ENCODE measurements at regions of chr1 and their contacts with region 1.

Region 1: GRCh38 chr1:17053685-17054410 is at the start of gene SDHB:
- DNase-seq: peak; percentile 97 to 100 (median 99)
- ATAC-seq: peak; percentile 98
- H3K4me3 ChIP-seq: peak within 1 kb of the TSS; percentile 93
- H3K4me3 Mint-ChIP-seq: peak within 1 kb of the TSS; percentile 100
- H3K27ac ChIP-seq: peak within 1 kb of the TSS; percentile 66 to 85
- H3K27ac Mint-ChIP-seq: peak within 1 kb of the TSS; percentile 97
- H3K4me1 ChIP-seq: peaks cover 19% of the 10 kb centered on the region
- H3K4me1 Mint-ChIP-seq: peaks cover 36% of the 10 kb centered on the region
- H3K27me3 ChIP-seq: no peaks in the 10 kb centered on the region
- H3K27me3 Mint-ChIP-seq: no peaks in the 10 kb centered on the region
- CTCF ChIP-seq: no peak
- total RNA-seq, gene SDHB: 53.9 to 56.2 TPM

Region 2: GRCh38 chr1:15409388-15410222 is 1644.2 kb before region 1 on chr1 and contains the start of gene EFHD2:
- CTCF ChIA-PET with region 1: no interaction called
- POLR2A ChIA-PET with region 1: no interaction called
- intact Hi-C with region 1: loop called in 1 of 2 experiments (anchors 10 kb)
- DNase-seq: peak; percentile 62 to 99 (median 85)
- ATAC-seq: peak; percentile 79
- H3K4me3 ChIP-seq: peak within 1 kb of the TSS; percentile 94
- H3K4me3 Mint-ChIP-seq: peak within 1 kb of the TSS; percentile 97
- H3K27ac ChIP-seq: peak within 1 kb of the TSS; percentile 55 to 85
- H3K27ac Mint-ChIP-seq: peak within 1 kb of the TSS; percentile 94
- H3K4me1 ChIP-seq: peaks cover 68% of the 10 kb centered on the region
- H3K4me1 Mint-ChIP-seq: peaks cover 35% of the 10 kb centered on the region
- H3K27me3 ChIP-seq: no peaks in the 10 kb centered on the region
- H3K27me3 Mint-ChIP-seq: no peaks in the 10 kb centered on the region
- CTCF ChIP-seq: no peak
- total RNA-seq, gene EFHD2: 79.1 to 80.9 TPM

Region 3: DNA sequence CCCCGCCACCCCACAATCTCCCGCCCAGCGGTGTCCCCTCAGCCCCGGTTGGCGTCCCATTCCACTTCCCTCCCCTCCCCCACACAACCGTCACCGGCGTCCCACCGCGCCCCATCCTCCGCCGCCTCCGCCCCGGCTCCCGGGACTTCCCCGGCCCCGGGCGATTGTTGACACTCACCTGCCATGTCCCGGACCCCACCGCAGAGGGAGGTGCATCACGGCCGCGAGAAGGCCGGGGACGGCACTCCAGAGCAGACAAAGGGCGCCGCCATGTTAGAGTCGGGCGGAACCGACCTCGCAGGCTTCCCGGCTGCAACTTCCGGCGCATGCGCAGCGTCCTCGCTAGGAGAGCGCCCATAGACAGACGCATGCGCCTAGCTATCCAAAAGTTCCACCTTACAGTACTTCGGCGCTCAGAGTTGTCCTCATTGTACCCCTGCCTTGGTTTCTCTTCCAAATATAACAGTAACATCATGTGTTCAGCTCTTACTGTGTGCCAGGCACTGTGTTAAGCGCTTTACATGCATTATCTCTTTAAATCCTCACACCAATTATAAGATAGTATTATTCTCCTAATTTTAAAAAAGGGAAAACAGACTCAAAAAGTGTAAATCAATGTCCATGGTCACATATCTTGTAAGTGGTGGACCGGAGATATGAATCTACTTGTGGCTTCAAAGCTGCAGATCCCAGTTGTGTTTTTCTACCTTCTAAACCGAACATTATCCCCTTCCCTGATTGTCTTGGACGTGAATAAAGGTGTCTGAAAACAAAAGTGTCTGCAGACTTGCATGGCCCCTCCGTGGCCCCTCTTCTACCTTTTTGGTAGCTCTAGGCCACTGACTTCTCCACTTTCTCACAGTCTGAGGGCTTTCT is 1077.8 kb before region 1 on chr1 and contains the start of gene ZBTB17:
- CTCF ChIA-PET with region 1: no interaction called
- POLR2A ChIA-PET with region 1: no interaction called
- intact Hi-C with region 1: loop called in 1 of 2 experiments (anchors 10 kb)
- DNase-seq: peak; percentile 91 to 99 (median 94)
- ATAC-seq: peak; percentile 92
- H3K4me3 ChIP-seq: peak within 1 kb of the TSS; percentile 91
- H3K4me3 Mint-ChIP-seq: peak within 1 kb of the TSS; percentile 99
- H3K27ac ChIP-seq: peak within 1 kb of the TSS; percentile 67 to 70
- H3K27ac Mint-ChIP-seq: peak within 1 kb of the TSS; percentile 92
- H3K4me1 ChIP-seq: peaks cover 37% of the 10 kb centered on the region
- H3K4me1 Mint-ChIP-seq: peaks cover 34% of the 10 kb centered on the region
- H3K27me3 ChIP-seq: no peaks in the 10 kb centered on the region
- H3K27me3 Mint-ChIP-seq: no peaks in the 10 kb centered on the region
- CTCF ChIP-seq: no peak
- total RNA-seq, gene ZBTB17: 70.2 to 78.1 TPM

Region 4: DNA sequence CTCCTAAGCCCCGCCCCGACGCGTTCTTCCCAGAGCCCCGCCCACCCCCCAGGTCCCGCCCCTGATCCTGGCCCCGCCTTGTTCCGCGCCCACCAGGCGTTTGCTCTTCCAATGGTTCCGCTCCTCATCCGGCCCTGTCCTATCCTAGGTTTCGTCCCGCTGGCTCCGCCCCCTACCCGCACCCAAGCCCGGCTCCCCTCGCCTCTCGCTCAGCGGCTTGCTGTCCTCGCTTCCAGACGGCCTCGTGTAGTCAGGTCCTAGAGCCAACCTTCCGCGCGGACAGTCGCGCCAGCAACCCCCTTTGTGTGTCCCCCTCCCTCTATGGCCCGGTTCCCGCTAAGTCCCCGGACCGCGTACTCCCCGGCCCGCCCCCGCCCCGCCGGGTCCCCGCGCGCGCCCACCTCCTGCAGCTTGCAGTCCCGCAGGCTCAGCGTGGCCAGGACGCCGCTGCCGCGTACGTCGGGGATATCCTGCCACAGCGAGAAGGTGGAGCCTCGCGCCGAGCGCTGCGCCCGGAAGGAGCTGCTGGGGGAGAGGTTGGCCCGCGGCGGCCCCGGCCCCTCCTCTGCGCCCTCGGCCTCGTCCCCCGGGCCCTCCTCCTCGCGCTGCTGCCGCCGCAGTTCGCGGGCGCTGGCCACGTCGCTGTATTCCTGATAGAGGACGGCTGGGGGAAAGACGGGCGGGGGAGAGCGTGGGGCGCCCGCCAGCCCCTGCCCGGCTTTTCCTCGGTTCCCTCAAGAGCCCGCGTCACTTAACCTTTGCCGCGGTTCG is 847.1 kb before region 1 on chr1:
- CTCF ChIA-PET with region 1: no interaction called
- POLR2A ChIA-PET with region 1: no interaction called
- intact Hi-C with region 1: loop called in 1 of 2 experiments (anchors 10 kb)
- DNase-seq: peak; percentile 85 to 98 (median 91)
- ATAC-seq: peak; percentile 88
- H3K4me3 ChIP-seq: peak overlapping the region; percentile 75
- H3K4me3 Mint-ChIP-seq: peak overlapping the region; percentile 93
- H3K27ac ChIP-seq: peak overlapping the region; percentile 60 to 86
- H3K27ac Mint-ChIP-seq: peak overlapping the region; percentile 95
- H3K4me1 ChIP-seq: peaks cover 25% of the 10 kb centered on the region
- H3K4me1 Mint-ChIP-seq: peaks cover 12% of the 10 kb centered on the region
- H3K27me3 ChIP-seq: no peaks in the 10 kb centered on the region
- H3K27me3 Mint-ChIP-seq: no peaks in the 10 kb centered on the region
- CTCF ChIP-seq: no peak

Region 5: GRCh38 chr1:16904560-16905111 is 149.2 kb before region 1 on chr1:
- CTCF ChIA-PET with region 1: no interaction called
- POLR2A ChIA-PET with region 1: no interaction called
- intact Hi-C with region 1: loop called in 1 of 2 experiments (anchors 5 kb)
- DNase-seq: peak; percentile 97 to 100 (median 99)
- ATAC-seq: peak; percentile 93
- H3K4me3 ChIP-seq: peak overlapping the region; percentile 63
- H3K4me3 Mint-ChIP-seq: no peak overlapping the region
- H3K27ac ChIP-seq: peak overlapping the region; percentile 98 to 99
- H3K27ac Mint-ChIP-seq: no peak overlapping the region
- H3K4me1 ChIP-seq: peaks cover 55% of the 10 kb centered on the region
- H3K4me1 Mint-ChIP-seq: peaks cover 36% of the 10 kb centered on the region
- H3K27me3 ChIP-seq: no peaks in the 10 kb centered on the region
- H3K27me3 Mint-ChIP-seq: no peaks in the 10 kb centered on the region
- CTCF ChIP-seq: no peak

Region 6: DNA sequence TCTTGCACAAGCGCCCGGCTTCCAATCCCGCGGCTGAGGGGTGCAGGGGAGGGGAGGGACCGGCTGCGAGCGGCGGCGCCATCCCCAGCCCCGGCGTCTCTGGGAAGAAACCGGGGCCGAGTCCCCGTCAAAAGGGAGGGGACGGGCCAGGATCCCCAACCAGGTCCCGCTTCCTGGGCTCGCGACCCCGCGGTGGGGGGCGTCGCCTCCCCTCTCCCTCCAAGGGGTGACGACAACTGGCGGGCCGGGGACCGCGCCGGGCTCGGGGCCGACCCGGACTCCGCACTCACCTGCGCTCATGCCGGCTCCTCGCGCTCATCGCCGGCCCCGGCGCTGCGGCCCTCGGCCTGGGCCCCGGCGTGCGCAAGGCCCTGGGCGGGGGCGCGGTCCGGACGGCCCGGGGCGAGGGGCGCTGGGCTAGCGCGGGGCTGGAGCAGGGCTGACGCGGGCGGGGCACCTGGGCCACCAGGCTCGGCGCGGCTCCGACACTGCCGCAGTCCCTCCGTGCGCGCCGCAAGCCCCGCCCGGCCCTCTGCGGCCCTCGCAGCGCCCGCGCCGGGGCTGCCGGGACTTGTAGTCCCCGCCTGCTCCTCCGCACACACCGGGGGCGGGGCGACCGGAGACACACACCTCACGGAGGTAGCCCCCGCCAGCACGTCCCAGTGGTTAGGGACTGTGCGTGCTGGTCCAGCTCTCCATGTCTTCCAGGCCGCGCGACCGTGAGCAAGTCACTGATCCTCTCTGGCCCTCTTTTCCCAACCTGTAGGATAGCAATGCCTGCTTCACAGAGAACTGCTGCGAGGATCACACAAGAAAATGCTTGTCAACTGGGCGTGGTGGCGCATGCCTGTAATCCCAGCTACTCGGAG is 42.2 kb before region 1 on chr1 and contains the start of gene ATP13A2:
- CTCF ChIA-PET with region 1: no interaction called
- POLR2A ChIA-PET with region 1: no interaction called
- intact Hi-C with region 1: loop called (anchors 1 to 5 kb)
- DNase-seq: peak; percentile 64 to 94 (median 80)
- ATAC-seq: peak; percentile 99
- H3K4me3 ChIP-seq: peak within 1 kb of the TSS; percentile 73
- H3K4me3 Mint-ChIP-seq: peak within 1 kb of the TSS; percentile 90
- H3K27ac ChIP-seq: no peak within 1 kb of the TSS
- H3K27ac Mint-ChIP-seq: peak within 1 kb of the TSS; percentile 73
- H3K4me1 ChIP-seq: peaks cover 35% of the 10 kb centered on the region
- H3K4me1 Mint-ChIP-seq: peaks cover 16% of the 10 kb centered on the region
- H3K27me3 ChIP-seq: no peaks in the 10 kb centered on the region
- H3K27me3 Mint-ChIP-seq: no peaks in the 10 kb centered on the region
- CTCF ChIP-seq: no peak
- total RNA-seq, gene ATP13A2: 27.0 to 30.6 TPM

Region 7: GRCh38 chr1:17439250-17440073 is 385.6 kb after region 1 on chr1 and contains the start of gene RCC2:
- CTCF ChIA-PET with region 1: no interaction called
- POLR2A ChIA-PET with region 1: no interaction called
- intact Hi-C with region 1: loop called (anchors 5 kb)
- DNase-seq: peak; percentile 51 to 92 (median 68)
- ATAC-seq: peak; percentile 77
- H3K4me3 ChIP-seq: peak within 1 kb of the TSS; percentile 94
- H3K4me3 Mint-ChIP-seq: peak within 1 kb of the TSS; percentile 98
- H3K27ac ChIP-seq: peak within 1 kb of the TSS; percentile 77 to 78
- H3K27ac Mint-ChIP-seq: peak within 1 kb of the TSS; percentile 95
- H3K4me1 ChIP-seq: peaks cover 38% of the 10 kb centered on the region
- H3K4me1 Mint-ChIP-seq: peaks cover 45% of the 10 kb centered on the region
- H3K27me3 ChIP-seq: no peaks in the 10 kb centered on the region
- H3K27me3 Mint-ChIP-seq: no peaks in the 10 kb centered on the region
- CTCF ChIP-seq: no peak
- total RNA-seq, gene RCC2: 20.1 to 21.0 TPM